Naive thymus-derived CD4-positive, alpha-beta T cell (primary cell): ENCODE measurements at regions of chr13 and their contacts with region 1.

Region 1: GRCh38 chr13:48155848-48156247 is 60.9 kb upstream of the MED4 start:
- DNase-seq: peak in 7 of 9 donors; percentile 49 to 81 (median 74)
- ATAC-seq: peak; percentile 88
- H3K4me3 ChIP-seq: peak overlapping the region; percentile 34
- H3K4me3 Mint-ChIP-seq: peak overlapping the region; percentile 62 to 83 (median 74)
- H3K27ac ChIP-seq: peak overlapping the region; percentile 75
- H3K27ac Mint-ChIP-seq: peak overlapping the region; percentile 89 to 99 (median 92)
- H3K4me1 ChIP-seq: peaks cover 28 to 64% of the 10 kb centered on the region in 2 donors
- H3K4me1 Mint-ChIP-seq: peaks cover 47 to 89% (median 78%) of the 10 kb centered on the region in 7 donors
- H3K27me3 ChIP-seq: no peaks in the 10 kb centered on the region
- H3K27me3 Mint-ChIP-seq: no peaks in the 10 kb centered on the region

Region 2: DNA sequence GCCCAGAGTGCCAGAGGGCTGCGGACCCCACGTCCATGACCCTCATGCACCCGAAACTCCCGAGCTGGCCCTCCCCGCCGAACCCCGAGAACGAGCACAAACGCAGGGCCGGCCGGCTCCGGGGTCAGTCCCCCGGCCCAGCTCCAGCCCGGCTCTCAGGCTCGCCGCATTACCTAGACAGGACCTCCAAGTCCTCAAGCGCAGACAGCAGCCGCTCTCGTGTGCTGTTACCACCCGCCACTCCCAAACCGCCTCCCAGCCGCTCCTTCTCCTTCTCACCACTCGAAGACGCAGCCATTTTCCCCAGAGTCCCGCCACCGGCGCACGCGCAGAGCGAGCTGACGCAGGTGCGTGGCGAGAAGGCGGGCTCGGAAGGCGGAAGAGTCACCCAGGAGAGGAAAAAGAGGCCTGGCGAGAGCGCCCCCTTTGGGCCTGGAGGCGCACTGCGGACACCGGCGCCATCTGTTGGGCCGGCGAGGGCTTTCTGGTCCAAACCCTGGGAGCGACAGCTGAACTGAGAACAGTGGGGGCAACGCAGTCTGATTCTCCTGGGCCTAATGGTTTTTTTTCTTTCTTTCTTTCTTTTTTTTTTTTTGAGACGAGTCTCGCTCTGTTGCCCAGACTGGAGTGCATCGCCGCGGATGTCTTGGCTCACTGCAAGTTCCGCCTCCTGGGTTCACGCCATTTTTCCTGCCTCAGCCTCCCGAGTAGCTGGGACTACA is 60.9 kb before region 1 on chr13 and contains the start of gene MED4:
- CTCF ChIA-PET with region 1: interaction called, 3 read pairs
- POLR2A ChIA-PET with region 1: interaction called, 4 read pairs
- intact Hi-C with region 1: loop called (anchors 1 kb)
- DNase-seq: peak; percentile 94 to 99 (median 98)
- ATAC-seq: peak; percentile 100
- H3K4me3 ChIP-seq: peak within 1 kb of the TSS; percentile 90
- H3K4me3 Mint-ChIP-seq: peak within 1 kb of the TSS; percentile 94 to 99 (median 96)
- H3K27ac ChIP-seq: peak within 1 kb of the TSS; percentile 99
- H3K27ac Mint-ChIP-seq: peak within 1 kb of the TSS; percentile 92 to 98 (median 96)
- H3K4me1 ChIP-seq: peaks cover 13 to 26% of the 10 kb centered on the region in 2 donors
- H3K4me1 Mint-ChIP-seq: peaks cover 26 to 56% (median 48%) of the 10 kb centered on the region in 7 donors
- H3K27me3 ChIP-seq: no peaks in the 10 kb centered on the region
- H3K27me3 Mint-ChIP-seq: peaks cover 0 to 9% (median 0%) of the 10 kb centered on the region in 5 donors
- total RNA-seq, gene MED4: 43.4 to 60.9 (median 50.0) TPM

Region 3: GRCh38 chr13:48167866-48168265 is 12.0 kb after region 1 on chr13:
- CTCF ChIA-PET with region 1: interaction called, 3 read pairs
- POLR2A ChIA-PET with region 1: interaction called, 15 read pairs
- intact Hi-C with region 1: no loop called
- DNase-seq: no peak
- ATAC-seq: no peak
- H3K4me3 ChIP-seq: no peak overlapping the region
- H3K4me3 Mint-ChIP-seq: no peak overlapping the region
- H3K27ac ChIP-seq: no peak overlapping the region
- H3K27ac Mint-ChIP-seq: no peak overlapping the region
- H3K4me1 ChIP-seq: no peaks in the 10 kb centered on the region
- H3K4me1 Mint-ChIP-seq: peaks cover 0 to 15% (median 6%) of the 10 kb centered on the region in 7 donors
- H3K27me3 ChIP-seq: no peaks in the 10 kb centered on the region
- H3K27me3 Mint-ChIP-seq: peaks cover 0 to 27% (median 0%) of the 10 kb centered on the region in 5 donors

Region 4: GRCh38 chr13:48194379-48194754 is 38.5 kb after region 1 on chr13:
- CTCF ChIA-PET with region 1: interaction called, 3 read pairs
- POLR2A ChIA-PET with region 1: interaction called, 114 read pairs
- intact Hi-C with region 1: no loop called
- DNase-seq: peak in 1 of 9 donors; percentile 20
- ATAC-seq: peak; percentile 86
- H3K4me3 ChIP-seq: no peak overlapping the region
- H3K4me3 Mint-ChIP-seq: peak overlapping the region in 9 of 10 donors; percentile 6 to 82 (median 56)
- H3K27ac ChIP-seq: no peak overlapping the region
- H3K27ac Mint-ChIP-seq: peak overlapping the region in 7 of 9 donors; percentile 14 to 86 (median 48)
- H3K4me1 ChIP-seq: peaks cover 4 to 12% of the 10 kb centered on the region in 2 donors
- H3K4me1 Mint-ChIP-seq: peaks cover 16 to 67% (median 44%) of the 10 kb centered on the region in 7 donors
- H3K27me3 ChIP-seq: no peaks in the 10 kb centered on the region
- H3K27me3 Mint-ChIP-seq: peaks cover 0 to 14% (median 0%) of the 10 kb centered on the region in 5 donors

Region 5: DNA sequence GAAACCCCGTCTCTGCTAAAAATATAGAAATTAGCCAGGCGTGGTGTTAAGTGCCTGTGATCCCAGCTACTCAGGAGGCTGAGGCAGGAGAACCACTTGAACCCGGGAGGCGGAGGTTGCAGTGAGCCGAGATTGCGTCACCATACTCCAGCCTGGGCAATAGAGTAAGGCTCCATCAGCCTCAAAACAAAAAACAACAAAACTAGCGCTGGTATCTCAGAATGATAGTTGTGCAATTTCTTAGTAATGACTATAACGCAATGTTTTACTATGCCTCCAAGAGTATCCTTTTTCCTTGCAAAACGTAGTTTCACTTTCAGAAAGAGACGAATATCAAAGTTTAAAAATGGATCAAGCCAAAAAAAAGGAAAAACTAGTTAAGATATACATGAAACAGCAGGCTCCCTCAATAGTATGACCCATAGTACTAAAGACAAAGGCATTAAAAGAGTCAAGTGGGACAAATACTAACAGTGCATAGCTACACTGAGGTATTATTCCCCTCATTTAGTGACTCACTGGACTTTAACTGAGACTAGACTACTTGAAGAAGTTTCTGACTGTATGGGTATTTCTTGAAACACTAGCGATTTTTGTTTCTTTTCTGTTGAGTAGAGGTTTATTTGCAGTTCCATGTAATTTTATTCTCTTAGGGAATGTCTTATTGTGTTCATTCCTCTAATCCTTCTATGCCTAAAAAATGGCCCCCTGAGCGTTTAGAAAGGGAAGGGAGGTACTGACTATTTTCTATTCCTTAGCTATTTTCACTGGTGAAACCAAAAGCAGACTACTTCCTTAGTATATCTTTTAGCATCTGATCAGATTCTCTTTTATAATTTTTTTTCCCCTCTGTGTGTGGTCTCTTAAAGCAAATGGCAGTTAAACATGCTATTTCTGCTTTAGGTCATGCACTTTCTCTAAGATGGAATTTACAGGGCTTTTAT is 66.8 kb after region 1 on chr13:
- CTCF ChIA-PET with region 1: interaction called, 13 read pairs
- POLR2A ChIA-PET with region 1: interaction called, 40 read pairs
- intact Hi-C with region 1: loop called (anchors 1 to 2 kb)
- DNase-seq: peak in 2 of 9 donors; percentile 25 to 30
- ATAC-seq: peak; percentile 58
- H3K4me3 ChIP-seq: peak overlapping the region; percentile 9
- H3K4me3 Mint-ChIP-seq: peak overlapping the region; percentile 48 to 91 (median 78)
- H3K27ac ChIP-seq: peak overlapping the region; percentile 83
- H3K27ac Mint-ChIP-seq: peak overlapping the region; percentile 38 to 99 (median 97)
- H3K4me1 ChIP-seq: peaks cover 40 to 60% of the 10 kb centered on the region in 2 donors
- H3K4me1 Mint-ChIP-seq: peaks cover 41 to 88% (median 74%) of the 10 kb centered on the region in 7 donors
- H3K27me3 ChIP-seq: no peaks in the 10 kb centered on the region
- H3K27me3 Mint-ChIP-seq: peaks cover 0 to 32% (median 0%) of the 10 kb centered on the region in 5 donors

Region 6: DNA sequence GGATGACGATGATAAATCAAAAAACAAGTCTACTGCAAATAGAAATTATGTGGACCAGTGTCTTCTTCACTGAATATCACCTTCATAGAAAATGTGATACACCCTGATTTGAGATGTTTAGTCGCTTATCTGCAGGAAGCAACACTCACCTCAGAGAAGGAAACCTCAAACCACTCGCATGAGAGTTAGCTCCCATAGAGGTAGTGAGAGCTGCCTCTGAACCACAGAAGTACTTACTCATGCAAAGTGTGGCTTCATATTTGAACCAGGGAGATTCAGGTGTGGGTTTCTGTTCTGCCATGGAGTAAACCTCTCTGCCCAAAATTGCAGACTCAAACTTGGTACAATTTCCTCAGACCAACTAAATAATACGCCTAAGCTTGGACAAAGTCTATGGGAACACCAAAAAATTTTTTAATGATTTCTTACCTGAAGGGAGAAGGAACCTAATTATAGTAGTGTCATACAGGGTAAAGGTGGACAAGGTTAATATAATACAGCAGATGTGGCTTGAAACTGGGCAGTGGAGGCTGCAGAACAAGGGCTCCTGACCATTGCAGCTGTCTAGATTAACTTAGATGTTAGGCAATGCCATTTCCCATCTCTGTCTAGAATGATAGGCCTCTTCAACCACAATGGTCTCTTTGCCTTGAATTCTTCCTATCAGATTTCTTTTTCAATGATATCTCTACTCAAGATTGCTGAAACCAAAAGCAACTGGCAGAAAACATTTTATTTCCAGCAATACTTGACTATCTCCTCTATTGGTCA is 406.6 kb after region 1 on chr13:
- CTCF ChIA-PET with region 1: no interaction called
- POLR2A ChIA-PET with region 1: no interaction called
- intact Hi-C with region 1: loop called in 1 of 2 experiments (anchors 5 kb)
- DNase-seq: peak in 8 of 9 donors; percentile 67 to 87 (median 79)
- ATAC-seq: peak; percentile 100
- H3K4me3 ChIP-seq: peak overlapping the region; percentile 12
- H3K4me3 Mint-ChIP-seq: peak overlapping the region in 9 of 10 donors; percentile 0 to 68 (median 54)
- H3K27ac ChIP-seq: no peak overlapping the region
- H3K27ac Mint-ChIP-seq: peak overlapping the region in 2 of 9 donors; percentile 71 to 82
- H3K4me1 ChIP-seq: peaks cover 22 to 31% of the 10 kb centered on the region in 2 donors
- H3K4me1 Mint-ChIP-seq: peaks cover 28 to 51% (median 36%) of the 10 kb centered on the region in 7 donors
- H3K27me3 ChIP-seq: no peaks in the 10 kb centered on the region
- H3K27me3 Mint-ChIP-seq: peaks cover 7 to 67% (median 13%) of the 10 kb centered on the region in 5 donors